Right lobe of liver (tissue), 6 donors: ENCODE measurements at regions of chr2 and their contacts with region 1.

Region 1: GRCh38 chr2:161946489-161947107 is 127.4 kb downstream of the DPP4 start:
- DNase-seq: no peak
- ATAC-seq: peak in 1 of 4 donors; percentile 47
- H3K4me3 ChIP-seq: no peak overlapping the region
- H3K27ac ChIP-seq: no peak overlapping the region
- H3K4me1 ChIP-seq: no peaks in the 10 kb centered on the region
- H3K27me3 ChIP-seq: no peaks in the 10 kb centered on the region
- CTCF ChIP-seq: peak; percentile 38 to 63 (median 59)
- POLR2A ChIP-seq: no peak

Region 2: GRCh38 chr2:161586517-161587167 is 360.0 kb before region 1 on chr2:
- intact Hi-C with region 1: loop called in 1 of 2 experiments (anchors 10 kb)
- DNase-seq: no peak
- ATAC-seq: peak; percentile 48 to 68 (median 58)
- H3K4me3 ChIP-seq: no peak overlapping the region
- H3K27ac ChIP-seq: no peak overlapping the region
- H3K4me1 ChIP-seq: no peaks in the 10 kb centered on the region
- H3K27me3 ChIP-seq: no peaks in the 10 kb centered on the region
- CTCF ChIP-seq: peak; percentile 57 to 61 (median 60)
- POLR2A ChIP-seq: no peak

Region 3: GRCh38 chr2:162475661-162476060 is 529.1 kb after region 1 on chr2:
- intact Hi-C with region 1: no loop called
- DNase-seq: no peak
- ATAC-seq: peak in 1 of 4 donors; percentile 25
- H3K4me3 ChIP-seq: no peak overlapping the region
- H3K27ac ChIP-seq: no peak overlapping the region
- H3K4me1 ChIP-seq: no peaks in the 10 kb centered on the region
- H3K27me3 ChIP-seq: no peaks in the 10 kb centered on the region
- CTCF ChIP-seq: no peak
- POLR2A ChIP-seq: no peak